Activated T-helper 2 cell treated with anti-CD3 and anti-CD28 coated beads, Interferon-gamma antibody, Interleukin-2, Interleukin-4, amounts not matched to agents 10 μg/mL and 5 μg/mL and 100 μg/mL, durations not matched to agents 14 hours and 24 hours and 36 hours (primary cell): ENCODE measurements at regions of chr5 and their contacts with region 1.

Region 1: GRCh38 chr5:149381987-149382340 is 2.9 kb upstream of the IL17B start:
- DNase-seq: peak; percentile 59
- H3K4me3 Mint-ChIP-seq: no peak overlapping the region
- H3K27ac Mint-ChIP-seq: no peak overlapping the region
- H3K4me1 Mint-ChIP-seq: no peaks in the 10 kb centered on the region
- H3K27me3 Mint-ChIP-seq: no peaks in the 10 kb centered on the region

Region 2: GRCh38 chr5:149434162-149435014 is 52.4 kb after region 1 on chr5:
- intact Hi-C with region 1: loop called (anchors 2 kb)
- DNase-seq: peak; percentile 21
- H3K4me3 Mint-ChIP-seq: no peak overlapping the region
- H3K27ac Mint-ChIP-seq: no peak overlapping the region
- H3K4me1 Mint-ChIP-seq: peaks cover 23% of the 10 kb centered on the region
- H3K27me3 Mint-ChIP-seq: no peaks in the 10 kb centered on the region

Region 3: GRCh38 chr5:149448831-149449714 is 67.1 kb after region 1 on chr5:
- intact Hi-C with region 1: no loop called
- DNase-seq: no peak
- H3K4me3 Mint-ChIP-seq: no peak overlapping the region
- H3K27ac Mint-ChIP-seq: no peak overlapping the region
- H3K4me1 Mint-ChIP-seq: no peaks in the 10 kb centered on the region
- H3K27me3 Mint-ChIP-seq: no peaks in the 10 kb centered on the region